Testis (tissue), 5 donors: ENCODE measurements at regions of chr9 and their contacts with region 1.

Region 1: DNA sequence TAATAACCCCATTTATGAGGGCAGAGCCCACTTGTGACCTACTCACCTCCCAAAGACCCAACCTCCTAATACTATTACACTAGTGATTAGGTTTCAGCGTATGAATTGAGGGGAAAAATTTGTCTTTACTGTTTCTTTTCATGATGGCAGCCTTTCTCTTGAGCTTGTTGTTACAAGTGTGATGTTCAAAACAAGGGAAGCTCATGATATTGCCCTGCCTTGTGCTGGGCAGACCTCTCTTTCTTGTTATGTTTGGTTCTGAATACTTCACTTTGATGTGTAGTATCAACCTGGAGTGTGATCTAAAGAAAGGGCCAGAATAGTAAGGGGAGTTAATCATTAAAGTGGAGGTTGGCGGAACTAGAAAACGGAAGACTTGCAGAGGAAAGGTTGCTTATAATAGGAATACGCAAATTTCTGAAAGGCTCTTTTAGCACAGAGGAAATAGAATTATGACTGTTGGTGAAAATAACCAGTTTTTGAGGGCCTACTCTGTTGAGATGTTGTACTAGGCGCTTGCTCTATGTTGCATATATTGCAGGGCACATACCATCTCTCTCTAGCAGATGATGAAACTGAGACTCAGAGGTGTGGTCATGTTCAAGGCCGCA is 68.2 kb downstream of the MELK start:
- DNase-seq: no peak
- H3K4me3 ChIP-seq: no peak overlapping the region
- H3K27ac ChIP-seq: no peak overlapping the region
- H3K4me1 ChIP-seq: no peaks in the 10 kb centered on the region
- H3K27me3 ChIP-seq: no peaks in the 10 kb centered on the region
- CTCF ChIP-seq: no peak
- POLR2A ChIP-seq: no peak

Region 2: GRCh38 chr9:36717276-36717675 is 76.4 kb after region 1 on chr9:
- intact Hi-C with region 1: loop called (anchors 10 kb)
- DNase-seq: no peak
- H3K4me3 ChIP-seq: no peak overlapping the region
- H3K27ac ChIP-seq: no peak overlapping the region
- H3K4me1 ChIP-seq: no peaks in the 10 kb centered on the region
- H3K27me3 ChIP-seq: no peaks in the 10 kb centered on the region
- CTCF ChIP-seq: no peak
- POLR2A ChIP-seq: no peak